Activated CD8-positive, alpha-beta T cell treated with anti-CD3 and anti-CD28 coated beads, Interleukin-2, amount 10 ng/mL, durations not matched to agents 7 days and 5 days (primary cell): ENCODE measurements at regions of chr19 and their contacts with region 1.

Region 1: DNA sequence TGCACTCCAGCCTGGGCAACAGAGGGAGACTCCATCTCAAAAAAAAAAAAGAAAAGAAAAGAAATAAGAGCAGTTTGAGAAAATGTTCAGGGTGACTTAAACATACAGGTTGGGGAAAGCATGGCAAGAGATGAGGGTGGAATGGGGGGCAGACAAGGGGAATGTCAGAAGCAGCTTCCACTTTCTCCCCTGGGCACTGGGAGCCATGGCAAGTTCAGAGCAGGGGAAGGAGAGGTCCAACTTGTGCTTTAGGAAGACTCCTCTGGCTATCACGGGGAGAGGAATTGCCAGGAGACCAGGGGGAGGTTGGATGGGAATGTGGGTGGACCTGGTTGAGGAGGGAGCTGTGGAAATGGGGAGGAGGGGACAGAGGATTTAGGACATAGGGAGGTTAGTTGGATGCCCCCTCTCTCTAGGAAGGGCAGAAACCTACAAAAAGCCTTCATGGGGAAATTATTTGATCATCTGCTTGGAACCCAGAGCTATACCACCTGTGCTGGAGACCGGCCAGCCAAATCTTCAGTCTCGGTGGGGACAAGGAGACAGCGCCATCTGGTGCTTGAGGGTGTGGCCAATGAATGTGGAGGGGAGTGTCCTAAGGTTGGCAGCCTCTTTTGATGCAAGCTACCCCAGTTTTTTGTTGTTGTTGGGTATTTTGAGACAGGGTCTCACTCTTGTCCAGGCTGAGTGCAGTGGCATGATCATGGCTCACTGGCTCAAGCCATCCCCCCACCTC is 7.3 kb upstream of the STRN4 start:
- DNase-seq: peak; percentile 85
- ATAC-seq: peak; percentile 84
- H3K4me3 Mint-ChIP-seq: no peak overlapping the region
- H3K27ac Mint-ChIP-seq: no peak overlapping the region
- H3K4me1 Mint-ChIP-seq: peaks cover 25% of the 10 kb centered on the region
- H3K27me3 Mint-ChIP-seq: no peaks in the 10 kb centered on the region

Region 2: DNA sequence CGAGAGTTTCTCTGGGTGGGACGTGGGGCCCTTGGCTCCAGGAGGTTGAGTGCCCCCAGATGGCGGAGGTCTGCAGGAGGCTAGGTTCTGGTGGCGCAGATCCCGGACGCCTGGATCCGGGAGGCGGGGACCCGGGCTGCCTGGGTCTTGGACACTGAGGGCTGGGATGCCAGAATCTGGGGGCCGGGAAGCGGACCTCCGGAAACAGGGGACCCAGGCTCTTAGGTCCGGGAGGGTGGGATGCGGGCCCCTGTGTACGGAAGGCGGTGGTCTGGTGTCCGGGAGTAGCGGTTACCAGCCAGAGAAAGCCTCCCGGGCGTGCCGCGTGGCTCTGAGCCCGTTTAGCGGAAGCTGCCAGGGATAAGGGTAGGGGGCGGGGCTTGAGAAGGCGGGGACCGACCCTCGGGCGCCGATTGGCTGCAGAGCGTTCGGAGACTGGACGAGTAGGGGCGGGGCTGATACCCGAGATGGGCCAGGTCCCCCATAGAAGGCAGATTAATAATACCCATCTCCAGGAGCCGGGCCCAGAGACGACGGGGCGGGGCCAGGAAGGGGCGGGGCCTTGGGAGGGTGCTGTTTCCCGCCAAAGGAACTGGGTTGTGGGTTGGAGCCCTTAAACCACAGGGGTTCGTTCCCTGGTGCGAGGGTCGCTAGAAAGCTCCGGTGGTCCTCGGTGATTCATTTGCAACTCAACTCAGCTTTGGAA is 34.8 kb after region 1 on chr19 and contains the start of gene SLC1A5:
- CTCF ChIA-PET with region 1: interaction called, 12 read pairs
- POLR2A ChIA-PET with region 1: interaction called, 6 read pairs
- DNase-seq: peak; percentile 99
- ATAC-seq: peak; percentile 71
- H3K4me3 Mint-ChIP-seq: peak within 1 kb of the TSS; percentile 98
- H3K27ac Mint-ChIP-seq: peak within 1 kb of the TSS; percentile 96
- H3K4me1 Mint-ChIP-seq: peaks cover 63% of the 10 kb centered on the region
- H3K27me3 Mint-ChIP-seq: no peaks in the 10 kb centered on the region
- total RNA-seq, gene SLC1A5: 176 to 178 TPM

Region 3: DNA sequence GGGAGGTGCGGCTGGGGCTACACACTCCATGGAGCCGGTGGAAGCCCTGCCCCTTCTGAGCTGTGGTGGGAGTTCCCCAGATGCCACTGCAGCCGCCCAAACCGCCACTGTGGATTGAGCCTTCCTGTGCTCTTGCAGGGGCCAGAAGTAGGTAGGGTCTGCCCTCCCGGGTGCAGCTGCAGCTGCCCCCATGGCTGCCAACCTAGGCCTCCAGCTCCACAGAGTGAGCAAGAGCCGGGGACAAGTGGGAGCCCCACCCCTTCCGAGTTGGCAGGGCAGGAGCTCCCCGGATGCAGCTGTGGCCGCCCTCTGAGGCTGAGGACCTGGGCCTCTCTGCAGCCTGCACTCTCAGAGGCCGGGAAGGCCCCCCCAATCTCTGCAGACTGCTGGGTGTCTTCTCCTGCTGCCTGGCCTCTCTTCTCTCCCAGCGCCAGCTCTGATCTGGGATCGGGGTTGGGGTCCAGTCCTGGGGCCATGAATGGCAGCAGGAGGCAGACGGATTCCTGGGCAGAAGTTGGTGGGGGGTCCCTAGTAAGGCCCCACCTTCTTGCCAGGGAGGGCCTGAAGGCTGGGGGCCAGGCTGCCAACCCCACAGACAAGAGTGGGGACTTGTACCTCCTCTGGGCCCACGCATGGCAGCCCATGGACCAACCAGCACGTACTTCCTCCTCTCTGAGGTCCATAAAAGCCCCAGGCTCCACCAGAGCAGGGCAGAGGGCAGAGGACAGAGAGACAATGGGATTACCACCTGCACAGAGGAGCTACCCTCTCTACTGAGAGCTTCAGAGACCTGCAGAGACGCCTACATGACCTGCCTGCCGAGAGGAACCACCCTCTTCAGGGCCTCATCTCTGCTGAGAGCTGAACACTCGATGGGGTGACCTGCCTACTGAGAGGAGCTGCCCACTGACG is 68.2 kb after region 1 on chr19:
- CTCF ChIA-PET with region 1: interaction called, 15 read pairs
- POLR2A ChIA-PET with region 1: interaction called, 3 read pairs
- DNase-seq: peak; percentile 83
- ATAC-seq: peak; percentile 91
- H3K4me3 Mint-ChIP-seq: peak overlapping the region; percentile 45
- H3K27ac Mint-ChIP-seq: peak overlapping the region; percentile 84
- H3K4me1 Mint-ChIP-seq: peaks cover 51% of the 10 kb centered on the region
- H3K27me3 Mint-ChIP-seq: no peaks in the 10 kb centered on the region